T-cell (primary cell): ENCODE measurements at regions of chr14 and their contacts with region 1.

Region 1: DNA sequence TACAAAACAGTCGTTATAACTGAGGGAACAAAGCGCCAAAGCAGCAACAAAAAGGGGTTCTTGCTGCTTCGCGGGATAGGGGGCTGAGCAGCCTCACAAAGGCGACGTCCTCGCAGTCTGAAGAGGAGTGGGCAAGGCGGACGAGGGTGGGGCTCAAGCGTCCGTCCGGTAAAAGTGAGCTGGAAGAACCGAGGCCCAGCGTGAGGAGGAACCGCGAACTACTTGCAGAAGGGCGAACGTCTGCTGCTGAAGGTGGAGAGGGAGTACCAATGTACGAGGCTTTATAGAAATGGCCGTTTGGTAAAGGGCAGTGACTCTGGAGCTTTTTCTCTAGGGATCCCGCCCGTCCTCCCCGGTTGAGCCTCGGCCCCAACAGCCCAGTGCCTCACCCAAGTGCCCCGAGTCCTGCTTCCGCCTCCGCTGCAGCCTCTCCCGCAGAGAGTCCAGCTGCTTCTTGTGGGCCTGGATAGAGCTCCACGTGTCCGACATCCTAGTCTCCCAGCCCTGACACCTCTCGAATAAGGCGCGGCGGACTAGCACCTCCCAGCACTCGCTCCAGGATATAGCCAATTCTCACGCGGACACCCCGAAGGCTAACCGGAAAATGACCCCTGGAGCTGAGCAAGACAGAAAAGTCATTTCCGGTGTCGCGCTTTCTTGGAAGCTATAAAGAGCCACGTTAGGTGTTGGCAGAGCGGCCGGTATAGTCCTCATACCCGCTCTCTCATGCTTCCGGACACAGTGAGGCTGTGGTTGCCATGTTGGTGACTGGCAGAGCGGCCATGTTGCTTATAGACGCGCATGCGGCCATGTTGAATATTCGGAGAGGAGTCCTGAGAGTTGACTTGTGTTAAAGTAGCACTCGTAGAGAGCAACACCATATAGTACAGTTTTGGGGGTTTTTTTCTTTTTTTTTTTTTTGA is at the start of gene METTL3:
- DNase-seq: peak; percentile 84 to 98 (median 95)
- ATAC-seq: peak; percentile 99 to 100 (median 100)
- H3K4me3 ChIP-seq: peak within 1 kb of the TSS; percentile 78 to 89
- H3K4me3 Mint-ChIP-seq: peak within 1 kb of the TSS; percentile 98 to 99 (median 99)
- H3K27ac ChIP-seq: peak within 1 kb of the TSS; percentile 85
- H3K27ac Mint-ChIP-seq: peak within 1 kb of the TSS; percentile 96 to 98
- H3K4me1 ChIP-seq: peaks cover 14 to 25% of the 10 kb centered on the region in 2 experiments
- H3K4me1 Mint-ChIP-seq: peaks cover 40 to 45% (median 41%) of the 10 kb centered on the region in 3 donors
- H3K27me3 ChIP-seq: peaks cover 0 to 2% of the 10 kb centered on the region in 2 experiments
- H3K27me3 Mint-ChIP-seq: no peaks in the 10 kb centered on the region
- total RNA-seq, gene METTL3: 48.0 to 94.6 (median 91.6) TPM

Region 2: DNA sequence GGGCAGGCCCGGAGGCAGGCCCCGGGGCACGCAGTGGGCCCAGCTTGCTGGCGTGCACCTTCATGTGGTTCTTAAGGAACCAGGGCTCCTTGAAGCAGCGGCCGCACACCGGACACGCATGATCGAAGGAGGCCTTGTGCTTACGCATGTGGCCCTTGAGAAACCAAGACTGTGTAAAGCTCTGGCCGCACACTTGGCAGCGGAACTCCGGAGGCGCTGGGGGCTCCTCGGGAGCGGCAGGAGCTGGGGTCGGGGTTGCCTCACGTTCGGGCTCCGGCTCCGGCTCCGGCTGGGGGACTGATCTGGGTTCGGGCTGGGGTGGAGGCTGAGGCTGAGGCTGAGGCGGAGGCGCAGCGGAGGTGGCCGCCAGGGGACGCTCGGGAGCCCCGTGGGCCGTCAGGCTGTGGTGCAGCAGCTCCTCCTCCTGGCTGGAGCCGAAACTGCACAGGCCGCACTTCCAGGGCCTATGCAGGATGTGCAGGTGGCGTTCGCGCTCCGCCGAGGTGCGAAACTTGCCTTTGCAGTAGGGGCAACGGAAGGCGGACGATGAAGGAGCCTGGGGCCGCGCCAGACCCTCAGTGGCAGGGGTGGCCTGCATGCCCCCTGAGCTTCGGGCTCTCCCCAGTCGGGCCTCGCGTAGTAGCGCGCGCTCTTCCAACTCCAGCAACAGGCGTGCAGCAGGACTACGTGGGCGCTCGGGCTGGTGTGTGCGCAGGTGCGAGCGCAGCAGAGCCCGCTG is 418.6 kb before region 1 on chr14:
- CTCF ChIA-PET with region 1: no interaction called
- POLR2A ChIA-PET with region 1: no interaction called
- DNase-seq: peak; percentile 72 to 97 (median 89)
- ATAC-seq: peak; percentile 58 to 95 (median 87)
- H3K4me3 ChIP-seq: no peak overlapping the region
- H3K4me3 Mint-ChIP-seq: no peak overlapping the region
- H3K27ac ChIP-seq: no peak overlapping the region
- H3K27ac Mint-ChIP-seq: no peak overlapping the region
- H3K4me1 ChIP-seq: peaks cover 3 to 27% of the 10 kb centered on the region in 2 experiments
- H3K4me1 Mint-ChIP-seq: peaks cover 22 to 34% (median 28%) of the 10 kb centered on the region in 3 donors
- H3K27me3 ChIP-seq: no peaks in the 10 kb centered on the region
- H3K27me3 Mint-ChIP-seq: no peaks in the 10 kb centered on the region

Region 3: GRCh38 chr14:21536418-21537089 is 25.6 kb after region 1 on chr14:
- CTCF ChIA-PET with region 1: no interaction called
- POLR2A ChIA-PET with region 1: no interaction called
- DNase-seq: no peak
- ATAC-seq: peak in 1 of 4 experiments; percentile 12
- H3K4me3 ChIP-seq: peak overlapping the region in 1 of 2 donors; percentile 32
- H3K4me3 Mint-ChIP-seq: peak overlapping the region in 2 of 3 donors; percentile 11 to 49
- H3K27ac ChIP-seq: no peak overlapping the region
- H3K27ac Mint-ChIP-seq: no peak overlapping the region
- H3K4me1 ChIP-seq: peaks cover 0 to 7% of the 10 kb centered on the region in 2 experiments
- H3K4me1 Mint-ChIP-seq: peaks cover 8 to 9% (median 9%) of the 10 kb centered on the region in 3 donors
- H3K27me3 ChIP-seq: peaks cover 16 to 20% of the 10 kb centered on the region in 2 experiments
- H3K27me3 Mint-ChIP-seq: peaks cover 55% of the 10 kb centered on the region in 2 donors

Region 4: DNA sequence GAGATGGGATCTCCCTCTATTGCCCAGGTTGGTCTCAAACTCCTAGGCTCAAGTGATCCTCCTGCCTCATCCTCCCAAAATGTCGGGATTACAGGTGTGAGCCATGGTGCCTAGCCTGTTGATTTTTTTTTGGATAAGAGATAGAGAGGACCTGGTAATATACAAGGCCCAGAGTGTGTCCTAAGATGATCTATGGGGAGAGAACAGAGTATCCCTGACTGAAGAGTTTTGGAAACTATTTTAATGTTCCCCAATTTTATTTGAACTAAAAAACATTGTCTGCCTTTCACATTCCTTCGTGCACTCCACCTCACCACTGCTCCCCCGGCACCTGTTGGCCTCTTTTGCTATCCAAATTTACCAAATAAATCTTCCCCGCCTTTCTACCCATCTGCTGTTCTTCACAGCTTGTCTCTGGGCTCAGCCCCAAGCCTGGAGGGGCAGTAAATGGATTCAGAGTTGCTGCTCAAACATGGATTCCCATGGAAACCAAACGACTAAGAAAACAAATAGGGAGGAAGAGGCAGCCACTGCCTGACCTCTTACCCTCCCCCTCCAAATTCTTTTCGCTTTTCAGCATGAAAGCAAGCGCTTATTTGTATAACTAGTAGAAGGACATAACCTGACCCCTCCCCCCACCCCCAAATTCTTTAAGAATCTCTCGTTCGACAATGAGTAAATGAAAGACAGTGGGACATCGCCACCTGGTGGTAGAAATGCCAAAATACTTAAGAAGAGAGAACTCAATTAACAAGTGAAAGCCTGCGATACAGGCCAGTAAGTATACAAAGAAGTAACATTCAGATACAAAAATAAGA is 46.3 kb after region 1 on chr14:
- CTCF ChIA-PET with region 1: interaction called, 9 to 10 read pairs
- POLR2A ChIA-PET with region 1: interaction called, 3 to 4 read pairs
- DNase-seq: peak; percentile 37 to 92 (median 66)
- ATAC-seq: peak; percentile 64 to 74 (median 68)
- H3K4me3 ChIP-seq: peak overlapping the region in 1 of 2 donors; percentile 23
- H3K4me3 Mint-ChIP-seq: peak overlapping the region; percentile 10 to 58 (median 26)
- H3K27ac ChIP-seq: no peak overlapping the region
- H3K27ac Mint-ChIP-seq: peak overlapping the region; percentile 4 to 44
- H3K4me1 ChIP-seq: peaks cover 0 to 4% of the 10 kb centered on the region in 2 experiments
- H3K4me1 Mint-ChIP-seq: peaks cover 6 to 7% (median 6%) of the 10 kb centered on the region in 3 donors
- H3K27me3 ChIP-seq: no peaks in the 10 kb centered on the region
- H3K27me3 Mint-ChIP-seq: no peaks in the 10 kb centered on the region

Region 5: GRCh38 chr14:21612324-21612723 is 101.3 kb after region 1 on chr14:
- CTCF ChIA-PET with region 1: no interaction called
- POLR2A ChIA-PET with region 1: no interaction called
- DNase-seq: peak in 1 of 35 experiments; percentile 14
- ATAC-seq: no peak
- H3K4me3 ChIP-seq: no peak overlapping the region
- H3K4me3 Mint-ChIP-seq: no peak overlapping the region
- H3K27ac ChIP-seq: no peak overlapping the region
- H3K27ac Mint-ChIP-seq: no peak overlapping the region
- H3K4me1 ChIP-seq: no peaks in the 10 kb centered on the region
- H3K4me1 Mint-ChIP-seq: no peaks in the 10 kb centered on the region
- H3K27me3 ChIP-seq: peaks cover 0 to 4% of the 10 kb centered on the region in 2 experiments
- H3K27me3 Mint-ChIP-seq: peaks cover 8 to 20% of the 10 kb centered on the region in 2 donors

Region 6: GRCh38 chr14:22791301-22791700 is 1280.3 kb after region 1 on chr14:
- CTCF ChIA-PET with region 1: no interaction called
- POLR2A ChIA-PET with region 1: no interaction called
- DNase-seq: no peak
- ATAC-seq: no peak
- H3K4me3 ChIP-seq: no peak overlapping the region
- H3K4me3 Mint-ChIP-seq: no peak overlapping the region
- H3K27ac ChIP-seq: no peak overlapping the region
- H3K27ac Mint-ChIP-seq: no peak overlapping the region
- H3K4me1 ChIP-seq: no peaks in the 10 kb centered on the region
- H3K4me1 Mint-ChIP-seq: no peaks in the 10 kb centered on the region
- H3K27me3 ChIP-seq: peaks cover 0 to 5% of the 10 kb centered on the region in 2 experiments
- H3K27me3 Mint-ChIP-seq: peaks cover 6 to 7% of the 10 kb centered on the region in 2 donors